RWPE1 (cell line): ENCODE measurements at regions of chr10 and their contacts with region 1.

Region 1: GRCh38 chr10:11724938-11725776 is 17.0 kb upstream of the ECHDC3 start:
- DNase-seq: peak; percentile 72
- H3K27ac ChIP-seq: no peak overlapping the region
- CTCF ChIP-seq: peak; percentile 67

Region 2: DNA sequence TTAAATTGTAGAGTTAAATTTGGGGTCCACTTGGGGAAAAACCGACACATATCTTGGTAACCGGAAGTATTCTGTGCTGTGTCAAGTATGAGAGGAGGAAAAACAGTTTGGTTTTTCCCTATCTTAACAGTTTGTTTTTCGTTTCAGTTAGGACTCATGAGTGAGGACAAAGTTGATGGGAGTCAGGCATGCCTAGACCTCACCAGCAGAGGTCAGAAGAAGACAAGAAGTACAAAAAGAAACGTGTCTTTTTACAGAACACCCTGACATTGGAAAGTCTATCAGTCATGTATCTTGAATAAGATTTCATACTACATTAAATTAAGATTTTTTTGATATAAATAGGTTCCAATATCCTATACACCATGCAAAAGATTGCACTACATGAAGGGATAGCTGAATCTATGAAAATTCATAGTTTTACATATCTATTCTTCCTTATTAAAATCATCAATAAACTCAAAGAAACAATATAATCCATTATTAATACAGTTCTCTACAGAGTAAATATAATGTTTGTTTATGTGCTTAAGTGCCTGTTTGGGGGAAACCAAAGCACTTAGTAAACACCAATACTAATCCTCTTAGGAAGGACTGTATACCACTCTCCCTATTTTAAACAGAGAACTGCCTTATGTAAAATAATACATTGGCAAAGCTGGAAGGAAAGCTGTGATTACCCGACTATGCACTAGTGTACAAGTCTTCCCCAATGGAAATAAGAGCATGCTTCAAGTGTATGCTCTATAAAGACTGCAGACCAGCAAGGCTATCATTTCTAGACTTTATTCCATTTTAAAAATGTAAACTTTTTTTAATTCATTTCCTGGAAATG is 209.3 kb before region 1 on chr10:
- CTCF ChIA-PET with region 1: interaction called, 12 read pairs
- POLR2A ChIA-PET with region 1: no interaction called
- DNase-seq: peak; percentile 49
- H3K27ac ChIP-seq: no peak overlapping the region
- CTCF ChIP-seq: peak; percentile 81

Region 3: GRCh38 chr10:11527068-11527467 is 198.1 kb before region 1 on chr10:
- CTCF ChIA-PET with region 1: no interaction called
- POLR2A ChIA-PET with region 1: no interaction called
- DNase-seq: no peak
- H3K27ac ChIP-seq: no peak overlapping the region
- CTCF ChIP-seq: no peak

Region 4: DNA sequence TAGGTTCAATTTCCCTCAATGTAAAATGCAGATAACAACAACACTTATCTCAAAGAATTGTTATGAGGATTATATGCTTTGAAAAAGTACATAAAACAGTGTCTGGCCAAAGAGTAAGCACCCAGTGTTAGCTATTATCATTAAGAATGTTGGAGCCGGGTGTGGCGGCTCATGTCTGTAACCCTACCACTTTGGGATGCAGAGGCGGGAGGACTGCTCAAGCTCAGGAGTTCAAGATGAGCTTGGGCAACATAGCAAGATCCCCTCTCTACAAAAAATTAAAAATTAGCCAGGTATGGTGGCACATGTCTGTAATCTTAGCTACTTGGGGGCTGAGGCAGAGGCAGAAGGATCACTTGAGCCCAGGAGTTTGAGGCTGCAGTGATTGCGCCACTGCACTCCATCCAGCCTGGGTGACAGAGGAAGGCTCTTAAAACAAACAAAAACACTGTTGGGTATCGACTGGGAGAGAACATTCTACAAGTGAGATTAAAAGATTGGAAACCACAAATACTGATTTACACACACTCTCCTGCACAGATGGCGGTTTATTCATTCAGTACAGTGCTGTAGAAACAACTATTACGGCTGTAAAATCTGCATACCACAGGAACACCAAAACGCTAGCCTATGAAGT is 205.3 kb after region 1 on chr10:
- CTCF ChIA-PET with region 1: no interaction called
- POLR2A ChIA-PET with region 1: no interaction called
- DNase-seq: no peak
- H3K27ac ChIP-seq: no peak overlapping the region
- CTCF ChIP-seq: no peak